WTC11 (cell line): ENCODE measurements at regions of chr15 and their contacts with region 1.

Region 1: GRCh38 chr15:41904541-41905005 is 10.7 kb upstream of the SPTBN5 start:
- DNase-seq: peak; percentile 81
- ATAC-seq: peak; percentile 91
- H3K4me3 Mint-ChIP-seq: no peak overlapping the region
- H3K27ac Mint-ChIP-seq: peak overlapping the region; percentile 86
- H3K4me1 Mint-ChIP-seq: peaks cover 7% of the 10 kb centered on the region
- H3K27me3 Mint-ChIP-seq: no peaks in the 10 kb centered on the region
- CTCF ChIP-seq: peak; percentile 63

Region 2: GRCh38 chr15:41806291-41807181 is 98.0 kb before region 1 on chr15:
- CTCF ChIA-PET with region 1: interaction called, 30 read pairs
- POLR2A ChIA-PET with region 1: no interaction called
- DNase-seq: peak; percentile 33
- ATAC-seq: peak; percentile 70
- H3K4me3 Mint-ChIP-seq: no peak overlapping the region
- H3K27ac Mint-ChIP-seq: 0 out of 2 replicates have a peak overlapping the region, but pooled peaks have one; percentile 14
- H3K4me1 Mint-ChIP-seq: peaks cover 6% of the 10 kb centered on the region
- H3K27me3 Mint-ChIP-seq: no peaks in the 10 kb centered on the region
- CTCF ChIP-seq: no peak

Region 3: GRCh38 chr15:41827880-41828806 is 76.4 kb before region 1 on chr15 and contains the start of gene JMJD7:
- CTCF ChIA-PET with region 1: interaction called, 32 read pairs
- POLR2A ChIA-PET with region 1: no interaction called
- DNase-seq: peak; percentile 93
- ATAC-seq: peak; percentile 93
- H3K4me3 Mint-ChIP-seq: peak within 1 kb of the TSS; percentile 92
- H3K27ac Mint-ChIP-seq: peak within 1 kb of the TSS; percentile 39; the same call in 1 of the 2 replicates
- H3K4me1 Mint-ChIP-seq: peaks cover 7% of the 10 kb centered on the region
- H3K27me3 Mint-ChIP-seq: no peaks in the 10 kb centered on the region
- CTCF ChIP-seq: no peak
- total RNA-seq, gene JMJD7: 14.8 to 19.9 TPM (median 18.2 TPM) in 3 replicates

Region 4: DNA sequence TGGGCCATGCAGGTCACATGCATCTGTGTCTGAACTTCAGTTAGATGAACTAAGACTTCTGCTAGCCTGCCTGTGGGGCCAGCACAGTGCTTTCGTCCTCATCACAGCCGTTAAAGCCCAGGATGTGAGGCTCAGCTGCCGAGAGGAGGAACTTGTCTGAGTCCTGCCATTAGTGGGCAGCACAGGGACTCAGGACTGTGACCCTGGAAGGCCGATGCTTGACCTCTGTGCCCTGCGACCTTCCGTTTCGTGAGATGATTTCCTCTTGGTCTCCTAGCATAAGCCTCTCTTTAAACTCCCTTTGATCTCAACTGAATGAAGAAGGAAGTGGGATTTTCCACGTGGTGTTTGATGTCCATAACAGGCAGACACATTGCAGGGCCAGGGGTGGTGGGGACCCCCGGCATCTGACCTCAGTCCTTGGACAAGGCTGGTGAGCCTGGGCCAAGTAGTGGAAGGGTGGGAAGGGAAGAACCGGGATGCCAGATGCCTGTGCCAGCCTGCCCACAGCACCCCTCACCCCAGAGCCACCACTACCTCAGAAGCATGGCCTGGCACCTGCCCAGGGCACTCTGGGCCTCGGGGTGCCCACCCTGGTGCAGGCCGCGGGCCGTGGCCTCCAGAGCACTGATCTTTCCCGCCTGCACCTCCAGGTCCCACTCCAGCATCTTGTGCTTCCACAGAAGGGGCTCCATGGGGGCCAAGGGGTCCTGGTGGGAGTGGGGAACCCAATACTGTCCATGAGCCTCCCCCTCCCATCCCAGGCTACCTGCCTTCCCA is 44.3 kb before region 1 on chr15:
- CTCF ChIA-PET with region 1: interaction called, 23 read pairs
- POLR2A ChIA-PET with region 1: no interaction called
- DNase-seq: no peak
- ATAC-seq: 0 out of 2 replicates have a peak, but pooled peaks have one; percentile 10
- H3K4me3 Mint-ChIP-seq: no peak overlapping the region
- H3K27ac Mint-ChIP-seq: no peak overlapping the region
- H3K4me1 Mint-ChIP-seq: peaks cover 9% of the 10 kb centered on the region
- H3K27me3 Mint-ChIP-seq: no peaks in the 10 kb centered on the region
- CTCF ChIP-seq: no peak

Region 5: DNA sequence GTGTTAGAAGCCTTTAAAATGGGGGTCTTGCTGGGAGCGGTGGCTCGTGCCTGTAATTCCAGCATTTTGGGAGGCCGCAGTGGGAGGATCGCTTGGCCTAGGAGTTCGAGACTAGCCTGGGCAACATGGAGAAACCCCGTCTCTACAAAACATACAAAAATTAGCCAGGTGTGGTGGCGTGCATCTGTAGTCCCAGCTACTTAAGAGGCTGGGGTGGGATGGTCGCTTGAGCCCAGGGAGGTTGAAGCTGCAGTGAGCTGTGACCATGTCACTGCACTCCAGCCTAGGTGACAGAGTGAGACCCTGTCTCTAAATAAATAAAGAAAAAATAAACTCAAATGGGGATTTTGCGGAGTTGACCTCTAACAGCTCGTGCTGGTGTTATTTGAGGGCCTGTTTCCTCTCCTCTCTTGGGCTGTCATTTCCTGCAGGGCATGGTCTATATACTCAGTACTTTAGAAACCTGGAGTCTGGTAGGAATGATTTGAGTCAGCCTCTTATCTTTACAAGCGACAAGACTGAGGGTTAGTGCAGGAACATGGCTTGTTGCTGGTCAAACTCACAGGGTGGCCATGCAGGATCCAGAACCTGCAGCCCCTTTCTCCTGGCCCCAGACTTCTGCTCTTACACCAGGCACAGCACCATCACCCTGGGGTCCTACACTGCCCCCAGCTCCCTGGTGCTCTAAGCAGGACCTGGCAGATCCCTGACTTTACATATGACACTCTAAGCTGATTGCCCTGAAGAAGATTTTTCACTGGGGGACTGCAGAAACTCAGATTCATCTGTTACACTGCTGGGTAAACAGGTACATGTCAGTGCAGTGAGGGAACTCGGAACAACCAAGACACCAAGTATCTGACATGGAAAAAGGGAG is 52.7 kb after region 1 on chr15:
- CTCF ChIA-PET with region 1: interaction called, 18 read pairs
- POLR2A ChIA-PET with region 1: no interaction called
- DNase-seq: no peak
- ATAC-seq: no peak
- H3K4me3 Mint-ChIP-seq: no peak overlapping the region
- H3K27ac Mint-ChIP-seq: peak overlapping the region; percentile 69
- H3K4me1 Mint-ChIP-seq: peaks cover 19% of the 10 kb centered on the region
- H3K27me3 Mint-ChIP-seq: no peaks in the 10 kb centered on the region
- CTCF ChIP-seq: no peak